ENCODE measurements at regions of chr1 and their contacts with region 1.

Region 1: DNA sequence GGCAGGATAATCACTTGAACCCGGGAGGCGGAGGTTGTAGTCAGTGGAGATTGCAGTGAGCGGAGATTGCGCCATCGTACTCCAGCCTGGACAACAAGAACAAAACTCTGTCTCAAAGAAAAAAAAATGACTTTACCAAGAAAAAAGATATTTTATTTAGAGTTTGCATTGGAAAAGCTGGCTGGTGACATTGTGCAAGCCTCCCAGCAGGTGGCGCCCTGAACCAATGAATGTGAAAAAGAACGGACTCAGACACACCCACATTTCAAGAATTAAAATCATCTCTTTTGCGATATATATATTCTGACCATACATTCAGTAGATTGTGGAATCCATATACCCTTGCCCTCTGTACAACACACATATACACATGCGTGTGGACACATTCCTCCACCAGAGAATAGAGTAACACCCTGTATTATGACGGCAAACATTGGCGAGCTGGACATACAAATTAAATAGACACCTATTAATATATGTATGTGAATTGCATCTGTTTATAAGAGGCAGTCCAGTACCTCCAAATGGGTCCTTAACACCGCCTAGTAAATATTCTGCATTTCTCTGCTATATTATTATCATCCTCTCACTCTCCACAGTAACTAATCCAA is 39.0 kb upstream of the CADM3 start:
- DNase-seq: peak; percentile 92
- H3K4me3 Mint-ChIP-seq: no peak overlapping the region
- H3K27ac Mint-ChIP-seq: no peak overlapping the region
- H3K4me1 Mint-ChIP-seq: no peaks in the 10 kb centered on the region
- H3K27me3 Mint-ChIP-seq: no peaks in the 10 kb centered on the region
- CTCF ChIP-seq: peak; percentile 95

Region 2: DNA sequence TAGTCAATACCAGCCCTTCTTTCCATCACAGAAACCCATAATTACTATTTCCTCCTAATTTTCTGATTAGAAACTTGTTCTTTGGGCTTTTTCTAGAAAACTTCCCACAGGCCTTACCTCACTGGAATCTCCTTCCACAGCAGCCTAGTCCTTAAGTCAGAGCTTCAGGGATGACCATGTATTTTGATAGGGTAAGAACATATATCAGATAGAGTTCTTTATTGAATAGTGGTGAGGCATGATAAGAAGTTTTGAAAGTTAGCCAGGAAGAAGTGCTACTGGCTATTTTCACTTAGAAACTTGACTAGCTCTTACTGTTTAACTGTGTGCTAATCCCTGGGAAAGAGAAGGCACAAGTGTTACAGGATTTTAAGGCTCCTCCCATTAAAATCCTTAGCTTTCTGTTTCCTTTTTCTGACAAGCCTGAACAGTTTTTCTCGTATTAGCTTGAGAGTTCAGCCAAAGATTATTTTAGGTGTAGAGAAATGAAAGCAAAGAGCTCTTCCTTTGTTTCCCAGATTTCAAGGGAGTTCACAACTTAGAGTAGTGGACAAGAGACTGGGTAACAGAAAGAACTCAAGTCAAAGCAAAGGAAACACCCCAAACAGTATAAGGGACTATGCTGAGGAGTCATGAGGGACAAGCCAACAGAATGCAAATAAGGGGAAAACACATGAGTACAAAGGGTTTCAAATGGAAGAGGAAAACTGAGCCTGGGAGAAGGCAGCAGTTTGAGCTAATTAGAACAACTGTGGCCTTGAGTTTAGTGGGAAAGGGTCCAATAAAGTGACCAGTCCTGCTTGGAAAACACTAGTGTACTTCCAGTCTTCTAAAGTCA is 18.6 kb before region 1 on chr1:
- CTCF ChIA-PET with region 1: interaction called, 12 read pairs
- POLR2A ChIA-PET with region 1: no interaction called
- intact Hi-C with region 1: no loop called
- DNase-seq: peak; percentile 11
- H3K4me3 Mint-ChIP-seq: no peak overlapping the region
- H3K27ac Mint-ChIP-seq: no peak overlapping the region
- H3K4me1 Mint-ChIP-seq: peaks cover 7% of the 10 kb centered on the region
- H3K27me3 Mint-ChIP-seq: no peaks in the 10 kb centered on the region
- CTCF ChIP-seq: no peak

Region 3: DNA sequence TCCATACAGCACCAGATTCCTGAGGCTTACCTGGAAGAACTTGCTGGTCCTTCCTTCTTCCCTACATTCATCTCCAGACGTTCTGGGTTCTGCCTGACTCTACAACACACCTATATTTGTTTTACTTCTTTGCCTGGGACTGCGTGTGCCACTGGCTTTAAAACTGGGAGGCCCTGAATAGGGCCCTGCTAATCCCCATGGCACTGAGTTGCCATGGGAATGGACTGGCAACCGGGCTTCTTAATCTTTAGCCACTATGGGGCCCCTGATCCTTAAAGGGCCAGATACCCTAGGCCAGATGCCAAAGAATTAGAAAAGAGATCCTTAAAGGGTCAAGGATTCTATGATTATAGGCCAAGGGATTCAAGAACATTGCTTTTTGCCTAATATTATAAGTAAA is 14.6 kb after region 1 on chr1:
- CTCF ChIA-PET with region 1: interaction called, 58 read pairs
- POLR2A ChIA-PET with region 1: interaction called, 3 read pairs
- intact Hi-C with region 1: no loop called
- DNase-seq: no peak
- H3K4me3 Mint-ChIP-seq: no peak overlapping the region
- H3K27ac Mint-ChIP-seq: no peak overlapping the region
- H3K4me1 Mint-ChIP-seq: peaks cover 1% of the 10 kb centered on the region
- H3K27me3 Mint-ChIP-seq: peaks cover 4% of the 10 kb centered on the region
- CTCF ChIP-seq: no peak

Region 4: DNA sequence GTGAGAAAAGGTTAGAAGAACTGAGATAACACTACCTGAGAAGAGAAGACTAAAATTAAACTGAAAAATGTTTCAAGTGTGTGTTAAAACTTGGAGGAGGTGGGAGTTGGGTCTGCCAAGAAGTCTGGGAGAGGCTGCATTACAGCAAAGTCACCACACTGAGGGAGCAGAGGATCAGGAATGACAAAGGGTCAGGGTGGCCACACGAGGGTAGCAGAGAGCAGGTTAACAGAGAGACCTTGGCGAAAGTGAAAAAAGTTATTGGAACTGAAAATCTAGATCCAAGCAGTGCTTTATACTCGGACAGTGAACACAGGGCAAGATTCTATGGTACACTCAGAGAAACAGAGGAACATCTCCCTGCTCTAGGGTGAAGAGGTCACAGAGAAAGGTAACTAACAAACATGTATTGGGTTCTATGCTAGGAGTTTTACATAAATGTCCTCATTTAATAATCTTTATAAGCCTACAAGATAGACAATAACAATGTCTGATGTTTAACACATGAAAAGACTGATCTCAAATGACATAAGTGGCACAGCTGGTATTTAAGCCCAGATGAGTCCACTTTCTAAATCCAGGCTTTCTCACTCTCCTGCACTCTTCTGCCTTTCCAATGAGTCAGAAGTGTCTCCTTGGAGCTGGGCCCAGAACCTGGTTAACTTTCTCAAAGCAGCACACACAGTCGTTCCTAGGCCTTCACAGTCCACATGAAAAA is 28.8 kb after region 1 on chr1:
- CTCF ChIA-PET with region 1: interaction called, 39 read pairs
- POLR2A ChIA-PET with region 1: interaction called, 3 read pairs
- intact Hi-C with region 1: no loop called
- DNase-seq: peak; percentile 99
- H3K4me3 Mint-ChIP-seq: peak overlapping the region; percentile 43
- H3K27ac Mint-ChIP-seq: peak overlapping the region; percentile 69
- H3K4me1 Mint-ChIP-seq: peaks cover 34% of the 10 kb centered on the region
- H3K27me3 Mint-ChIP-seq: peaks cover 36% of the 10 kb centered on the region
- CTCF ChIP-seq: peak; percentile 100

Region 5: GRCh38 chr1:159780583-159781582 is 648.5 kb after region 1 on chr1 and contains the start of gene DUSP23:
- CTCF ChIA-PET with region 1: interaction called, 50 read pairs
- POLR2A ChIA-PET with region 1: interaction called, 3 read pairs
- intact Hi-C with region 1: no loop called
- DNase-seq: peak; percentile 100
- H3K4me3 Mint-ChIP-seq: peak within 1 kb of the TSS; percentile 87
- H3K27ac Mint-ChIP-seq: peak within 1 kb of the TSS; percentile 71
- H3K4me1 Mint-ChIP-seq: peaks cover 65% of the 10 kb centered on the region
- H3K27me3 Mint-ChIP-seq: no peaks in the 10 kb centered on the region
- CTCF ChIP-seq: peak; percentile 97
- total RNA-seq, gene DUSP23: 119 and 178 TPM in 2 replicates

Region 6: GRCh38 chr1:159804924-159805323 is 672.5 kb after region 1 on chr1:
- CTCF ChIA-PET with region 1: interaction called, 46 read pairs
- POLR2A ChIA-PET with region 1: no interaction called
- intact Hi-C with region 1: no loop called
- DNase-seq: no peak
- H3K4me3 Mint-ChIP-seq: no peak overlapping the region
- H3K27ac Mint-ChIP-seq: no peak overlapping the region
- H3K4me1 Mint-ChIP-seq: peaks cover 6% of the 10 kb centered on the region
- H3K27me3 Mint-ChIP-seq: no peaks in the 10 kb centered on the region
- CTCF ChIP-seq: no peak